ENCODE measurements at regions of chr6 and their contacts with region 1.

Region 1: DNA sequence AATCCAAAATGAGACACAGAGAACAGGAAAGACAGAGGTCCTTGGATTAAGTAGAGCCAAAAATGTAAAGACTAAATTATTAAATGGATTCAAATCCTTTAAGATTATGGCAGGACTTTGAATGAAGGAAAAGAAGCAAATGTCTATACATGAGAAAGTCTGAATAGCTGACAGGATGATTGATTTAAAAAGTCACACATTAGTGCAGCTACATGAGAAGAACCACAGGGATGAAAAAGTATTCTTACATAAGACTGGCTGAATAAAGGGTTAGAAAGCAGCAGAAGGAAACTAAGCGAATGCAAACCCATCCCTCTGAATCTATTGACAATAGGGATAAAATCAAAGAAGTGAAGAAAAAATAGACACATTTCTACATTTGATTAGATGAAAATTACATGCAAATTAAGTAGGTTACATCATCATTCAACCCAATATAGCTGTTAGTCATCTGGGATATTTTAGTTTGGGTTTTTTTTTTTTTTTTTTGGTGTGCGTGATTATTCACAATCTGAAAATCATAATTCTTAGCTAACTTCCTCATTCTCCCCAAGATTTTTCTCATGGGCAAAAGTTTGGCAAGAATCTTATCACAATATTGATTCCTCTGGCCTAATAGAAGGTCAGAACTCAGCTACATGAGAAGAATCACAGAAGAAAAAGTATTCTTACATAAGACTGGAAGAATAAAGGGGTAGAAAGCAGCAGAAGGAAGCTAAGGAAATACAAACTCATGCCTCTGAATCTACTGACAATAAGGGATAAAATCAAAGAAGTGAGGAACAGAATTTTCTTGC is 845.4 kb downstream of the HACE1 start:
- DNase-seq: no peak
- ATAC-seq: no peak
- H3K4me3 ChIP-seq: no peak overlapping the region
- H3K4me3 Mint-ChIP-seq: no peak overlapping the region
- H3K27ac ChIP-seq: no peak overlapping the region
- H3K27ac Mint-ChIP-seq: no peak overlapping the region
- H3K4me1 ChIP-seq: no peaks in the 10 kb centered on the region
- H3K4me1 Mint-ChIP-seq: no peaks in the 10 kb centered on the region
- H3K27me3 ChIP-seq: peaks cover 0 to 2% of the 10 kb centered on the region in 2 experiments
- H3K27me3 Mint-ChIP-seq: no peaks in the 10 kb centered on the region

Region 2: GRCh38 chr6:104031346-104031745 is 17.0 kb after region 1 on chr6:
- CTCF ChIA-PET with region 1: no interaction called
- POLR2A ChIA-PET with region 1: interaction called in 1 of 2 experiments, 10 read pairs
- DNase-seq: no peak
- ATAC-seq: no peak
- H3K4me3 ChIP-seq: no peak overlapping the region
- H3K4me3 Mint-ChIP-seq: no peak overlapping the region
- H3K27ac ChIP-seq: no peak overlapping the region
- H3K27ac Mint-ChIP-seq: no peak overlapping the region
- H3K4me1 ChIP-seq: no peaks in the 10 kb centered on the region
- H3K4me1 Mint-ChIP-seq: no peaks in the 10 kb centered on the region
- H3K27me3 ChIP-seq: no peaks in the 10 kb centered on the region
- H3K27me3 Mint-ChIP-seq: no peaks in the 10 kb centered on the region

Region 3: DNA sequence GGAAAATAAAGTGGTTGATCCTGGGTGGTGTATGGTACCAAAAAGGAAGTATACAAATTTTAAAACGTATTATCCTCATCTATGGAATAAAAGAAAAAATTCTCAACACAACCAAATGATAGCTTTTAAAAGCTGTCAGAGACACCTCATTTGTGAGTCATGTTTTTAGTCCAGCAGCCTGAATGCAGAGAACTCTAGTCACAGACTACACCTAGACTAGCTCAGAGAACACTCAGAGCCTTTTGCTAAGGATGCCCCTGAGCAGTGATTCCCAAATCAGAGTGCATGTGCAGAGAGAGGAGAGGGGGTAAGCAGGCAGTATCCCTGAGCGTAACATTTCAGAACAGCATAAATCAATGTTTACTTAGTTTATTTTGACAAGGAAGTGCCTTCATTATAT is 36.1 kb after region 1 on chr6:
- CTCF ChIA-PET with region 1: no interaction called
- POLR2A ChIA-PET with region 1: no interaction called
- DNase-seq: no peak
- ATAC-seq: no peak
- H3K4me3 ChIP-seq: no peak overlapping the region
- H3K4me3 Mint-ChIP-seq: no peak overlapping the region
- H3K27ac ChIP-seq: no peak overlapping the region
- H3K27ac Mint-ChIP-seq: no peak overlapping the region
- H3K4me1 ChIP-seq: no peaks in the 10 kb centered on the region
- H3K4me1 Mint-ChIP-seq: no peaks in the 10 kb centered on the region
- H3K27me3 ChIP-seq: no peaks in the 10 kb centered on the region
- H3K27me3 Mint-ChIP-seq: no peaks in the 10 kb centered on the region